ENCODE measurements at regions of chr11 and their contacts with region 1.

Region 1: DNA sequence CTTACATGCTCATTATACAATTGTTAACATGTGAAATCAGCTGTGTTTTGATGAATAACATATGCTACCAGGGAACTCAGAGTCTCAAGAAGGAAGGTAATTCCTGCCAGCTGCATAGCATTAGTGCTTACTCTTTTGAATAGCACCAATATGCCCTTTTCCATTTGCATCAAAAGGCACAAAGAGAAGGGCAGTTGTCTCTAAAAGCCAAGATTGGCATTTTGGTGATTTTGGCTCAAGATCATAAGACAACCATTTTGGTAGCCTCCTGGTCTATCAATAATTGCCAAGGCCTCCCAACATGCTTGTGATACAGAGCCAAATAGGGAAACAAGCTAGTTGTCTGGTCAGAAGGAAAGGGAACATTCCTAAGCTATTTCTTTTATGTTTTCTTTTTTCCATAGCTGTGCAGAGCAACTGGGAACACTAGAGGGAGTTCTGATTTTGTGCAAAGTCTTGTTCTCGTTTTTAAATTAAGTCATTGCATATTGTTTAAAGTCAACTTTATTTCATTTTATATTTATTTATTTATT is 416.7 kb upstream of the CHORDC1 start:
- DNase-seq: peak; percentile 9
- H3K4me3 ChIP-seq: no peak overlapping the region
- H3K27ac ChIP-seq: no peak overlapping the region
- H3K4me1 ChIP-seq: no peaks in the 10 kb centered on the region
- H3K27me3 ChIP-seq: no peaks in the 10 kb centered on the region
- CTCF ChIP-seq: peak in 1 of 2 donors; percentile 16
- POLR2A ChIP-seq: no peak

Region 2: GRCh38 chr11:90407350-90407749 is 232.2 kb before region 1 on chr11:
- CTCF ChIA-PET with region 1: no interaction called
- POLR2A ChIA-PET with region 1: no interaction called
- dilution Hi-C with region 1: no loop called
- intact Hi-C with region 1: no loop called
- DNase-seq: no peak
- H3K4me3 ChIP-seq: no peak overlapping the region
- H3K27ac ChIP-seq: no peak overlapping the region
- H3K4me1 ChIP-seq: no peaks in the 10 kb centered on the region
- H3K27me3 ChIP-seq: no peaks in the 10 kb centered on the region
- CTCF ChIP-seq: no peak
- POLR2A ChIP-seq: no peak

Region 3: GRCh38 chr11:90947930-90948329 is 308.4 kb after region 1 on chr11:
- CTCF ChIA-PET with region 1: no interaction called
- POLR2A ChIA-PET with region 1: no interaction called
- dilution Hi-C with region 1: no loop called
- intact Hi-C with region 1: loop called (anchors 10 kb)
- DNase-seq: no peak
- H3K4me3 ChIP-seq: no peak overlapping the region
- H3K27ac ChIP-seq: no peak overlapping the region
- H3K4me1 ChIP-seq: no peaks in the 10 kb centered on the region
- H3K27me3 ChIP-seq: no peaks in the 10 kb centered on the region
- CTCF ChIP-seq: no peak
- POLR2A ChIP-seq: no peak

Region 4: DNA sequence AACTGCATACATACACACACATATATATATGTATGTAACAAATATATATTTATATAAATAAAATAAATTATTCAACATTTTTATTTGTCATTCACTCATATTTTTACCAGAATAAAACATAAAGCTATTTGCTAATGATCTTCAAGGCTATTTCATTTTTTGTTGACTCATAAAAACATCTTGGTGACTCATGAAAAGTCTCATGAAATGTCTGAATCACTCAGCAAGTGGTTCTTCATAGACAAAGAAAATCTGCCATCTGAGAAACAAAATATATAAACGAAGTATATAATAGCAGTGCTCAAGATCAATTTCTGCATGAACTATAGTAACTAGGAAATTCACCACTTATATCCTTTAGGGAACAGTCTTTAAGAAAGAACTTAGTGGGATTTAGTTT is 820.3 kb after region 1 on chr11:
- CTCF ChIA-PET with region 1: no interaction called
- POLR2A ChIA-PET with region 1: no interaction called
- dilution Hi-C with region 1: no loop called
- intact Hi-C with region 1: loop called (anchors 5 kb)
- DNase-seq: no peak
- H3K4me3 ChIP-seq: no peak overlapping the region
- H3K27ac ChIP-seq: no peak overlapping the region
- H3K4me1 ChIP-seq: no peaks in the 10 kb centered on the region
- H3K27me3 ChIP-seq: no peaks in the 10 kb centered on the region
- CTCF ChIP-seq: no peak
- POLR2A ChIP-seq: no peak